ENCODE measurements at regions of chr20 and their contacts with region 1.

Region 1: GRCh38 chr20:34872622-34873224 is at the start of gene GGT7:
- DNase-seq: peak; percentile 93
- ATAC-seq: peak; percentile 65
- H3K4me3 ChIP-seq: peak within 1 kb of the TSS; percentile 77
- H3K27ac ChIP-seq: peak within 1 kb of the TSS; percentile 65
- H3K4me1 ChIP-seq: peaks cover 35% of the 10 kb centered on the region
- H3K27me3 ChIP-seq: no peaks in the 10 kb centered on the region
- CTCF ChIP-seq: peak; percentile 72
- total RNA-seq, gene GGT7: 20.6 TPM

Region 2: DNA sequence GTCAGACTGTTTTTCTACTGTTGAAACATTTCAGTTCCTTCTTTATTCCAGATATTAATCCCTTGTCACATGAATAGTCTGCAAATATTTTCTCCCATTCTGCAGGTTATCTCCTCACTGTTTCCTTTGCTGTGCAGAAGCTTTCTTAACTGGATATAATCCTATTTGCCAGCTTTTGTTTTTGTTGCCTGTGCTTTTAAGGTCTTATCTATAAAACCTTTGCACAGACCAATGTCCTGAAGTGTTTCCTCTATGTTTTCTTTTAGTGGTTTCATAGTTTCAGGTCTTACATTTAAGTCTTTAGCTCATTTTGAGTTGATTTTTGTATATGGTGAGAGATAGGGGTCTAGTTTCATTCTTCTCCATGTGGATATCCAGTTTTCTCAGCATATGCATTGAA is 66.5 kb before region 1 on chr20:
- intact Hi-C with region 1: no loop called
- DNase-seq: no peak
- ATAC-seq: no peak
- H3K4me3 ChIP-seq: no peak overlapping the region
- H3K27ac ChIP-seq: no peak overlapping the region
- H3K4me1 ChIP-seq: no peaks in the 10 kb centered on the region
- H3K27me3 ChIP-seq: no peaks in the 10 kb centered on the region
- CTCF ChIP-seq: no peak

Region 3: DNA sequence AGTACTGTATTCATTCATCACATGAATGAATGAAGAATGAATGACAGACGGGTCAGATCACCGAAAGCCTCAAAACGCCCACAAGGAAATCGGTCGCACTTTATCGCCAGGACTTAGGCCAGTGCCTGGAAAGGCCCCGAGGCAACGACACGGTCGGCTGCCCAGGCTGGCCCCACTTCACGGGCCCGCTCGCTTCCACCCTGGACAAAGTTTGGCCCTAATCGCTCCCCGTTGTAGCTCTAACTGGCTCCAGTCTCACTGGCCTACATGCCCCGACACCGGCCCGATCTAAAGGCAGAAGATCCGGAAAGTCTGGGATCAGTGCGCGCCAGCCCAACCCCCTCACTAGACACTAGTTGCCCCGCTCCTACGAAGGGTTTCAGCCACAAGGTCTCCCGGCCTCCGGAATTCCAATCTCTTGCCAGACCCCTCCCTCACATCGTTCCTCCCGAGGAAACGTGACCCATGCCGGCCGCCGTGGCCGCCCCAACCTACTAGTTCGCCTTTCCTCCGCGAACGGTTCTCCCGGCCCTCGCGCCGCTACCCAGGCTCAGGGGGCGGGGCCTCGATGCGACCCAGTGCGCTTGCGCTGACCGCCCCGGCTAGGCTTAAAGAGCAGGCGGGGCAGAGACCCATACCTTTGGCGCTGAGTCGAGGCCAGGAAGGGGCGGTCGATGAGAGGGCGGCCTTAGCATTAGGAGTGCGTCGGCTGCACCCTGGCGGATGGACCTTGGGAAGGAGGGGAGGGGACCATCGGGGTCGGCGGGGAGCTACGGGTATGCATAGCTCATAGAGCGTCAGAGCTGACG is 82.7 kb after region 1 on chr20 and contains the starts of genes GSS and MYH7B:
- intact Hi-C with region 1: loop called (anchors 5 kb)
- DNase-seq: peak; percentile 99
- ATAC-seq: peak; percentile 98
- H3K4me3 ChIP-seq: peak within 1 kb of the TSS; percentile 66
- H3K27ac ChIP-seq: peak within 1 kb of the TSS; percentile 87
- H3K4me1 ChIP-seq: peaks cover 12% of the 10 kb centered on the region
- H3K27me3 ChIP-seq: no peaks in the 10 kb centered on the region
- CTCF ChIP-seq: peak; percentile 47
- total RNA-seq, gene GSS: 30.0 TPM
- total RNA-seq, gene MYH7B: 1.8 TPM

Region 4: GRCh38 chr20:34968042-34968775 is 95.5 kb after region 1 on chr20:
- intact Hi-C with region 1: no loop called
- DNase-seq: no peak
- ATAC-seq: no peak
- H3K4me3 ChIP-seq: no peak overlapping the region
- H3K27ac ChIP-seq: no peak overlapping the region
- H3K4me1 ChIP-seq: no peaks in the 10 kb centered on the region
- H3K27me3 ChIP-seq: no peaks in the 10 kb centered on the region
- CTCF ChIP-seq: no peak

Measured in upper lobe of right lung (tissue), 1 donor.